ENCODE measurements at regions of chr17 and their contacts with region 1.

Region 1: DNA sequence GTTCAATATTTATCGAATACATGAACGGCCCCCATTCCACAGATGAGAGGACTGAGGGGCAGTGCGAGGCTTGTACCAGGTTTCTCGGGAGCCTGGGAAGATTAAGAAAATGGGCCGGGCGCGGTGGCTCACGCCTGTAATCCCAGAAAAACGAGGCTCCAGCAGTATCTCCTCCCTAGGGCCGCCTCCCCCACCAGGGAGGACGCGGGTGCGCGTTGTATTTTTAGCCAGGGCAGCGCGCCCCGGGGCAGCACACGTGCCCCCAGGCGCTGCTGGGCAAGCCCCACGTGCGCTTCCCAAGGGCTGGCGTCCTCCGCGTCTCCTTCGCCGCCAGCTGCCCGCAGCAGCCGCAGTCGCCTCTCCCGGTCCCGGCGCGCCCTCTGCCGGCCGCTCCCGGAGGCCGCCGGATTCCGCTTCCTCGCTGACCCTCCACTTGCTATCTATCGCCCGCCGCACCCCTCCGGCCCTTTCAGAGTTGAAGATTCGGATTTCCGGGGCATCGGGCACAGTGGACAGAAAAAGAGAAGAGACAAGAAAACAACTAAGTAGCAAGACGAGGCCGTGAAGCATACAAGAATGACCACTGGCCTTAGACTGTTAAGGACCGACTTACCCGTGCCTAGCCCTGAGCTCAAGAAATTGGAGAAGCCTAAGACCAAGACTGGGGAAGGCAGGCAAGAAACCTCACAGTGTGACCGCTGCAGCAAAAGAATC is 1.9 kb upstream of the YBX2 start:
- DNase-seq: peak; percentile 93
- ATAC-seq: peak; percentile 88

Region 2: GRCh38 chr17:7177196-7177953 is 119.0 kb before region 1 on chr17:
- intact Hi-C with region 1: no loop called
- DNase-seq: peak; percentile 70
- ATAC-seq: peak; percentile 83

Region 3: DNA sequence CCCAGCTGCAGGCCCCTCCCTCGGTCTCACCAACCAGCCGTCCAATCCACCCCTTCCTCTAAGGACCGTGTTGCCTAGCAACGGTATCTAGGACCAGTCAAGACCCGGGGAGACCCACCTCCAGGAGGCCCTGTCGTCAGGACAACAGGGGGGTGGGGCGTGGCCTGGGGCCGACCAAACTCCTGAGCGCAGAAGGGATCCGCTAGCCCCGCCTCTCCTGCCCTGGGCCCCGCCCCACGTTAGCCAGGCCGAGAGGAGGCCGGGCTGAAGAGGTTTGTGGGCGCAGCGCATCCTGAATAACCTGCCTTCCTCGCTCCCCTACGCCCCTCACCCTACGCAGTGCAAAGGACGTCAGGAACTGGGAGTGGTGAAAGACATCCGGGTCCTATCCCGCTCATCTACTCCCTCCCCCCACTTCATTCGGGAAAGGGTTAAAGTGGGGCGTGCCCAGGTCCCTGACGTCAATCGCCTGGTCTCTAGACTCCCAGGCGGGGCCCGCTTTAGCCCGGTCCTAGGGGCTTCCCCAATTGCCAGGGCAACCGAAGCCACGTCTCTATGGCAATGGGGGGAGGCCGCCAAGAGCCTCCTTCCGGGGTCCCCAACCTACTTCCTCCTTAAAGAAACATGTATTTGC is 91.4 kb before region 1 on chr17:
- intact Hi-C with region 1: no loop called
- DNase-seq: peak; percentile 93
- ATAC-seq: peak; percentile 91

Region 4: DNA sequence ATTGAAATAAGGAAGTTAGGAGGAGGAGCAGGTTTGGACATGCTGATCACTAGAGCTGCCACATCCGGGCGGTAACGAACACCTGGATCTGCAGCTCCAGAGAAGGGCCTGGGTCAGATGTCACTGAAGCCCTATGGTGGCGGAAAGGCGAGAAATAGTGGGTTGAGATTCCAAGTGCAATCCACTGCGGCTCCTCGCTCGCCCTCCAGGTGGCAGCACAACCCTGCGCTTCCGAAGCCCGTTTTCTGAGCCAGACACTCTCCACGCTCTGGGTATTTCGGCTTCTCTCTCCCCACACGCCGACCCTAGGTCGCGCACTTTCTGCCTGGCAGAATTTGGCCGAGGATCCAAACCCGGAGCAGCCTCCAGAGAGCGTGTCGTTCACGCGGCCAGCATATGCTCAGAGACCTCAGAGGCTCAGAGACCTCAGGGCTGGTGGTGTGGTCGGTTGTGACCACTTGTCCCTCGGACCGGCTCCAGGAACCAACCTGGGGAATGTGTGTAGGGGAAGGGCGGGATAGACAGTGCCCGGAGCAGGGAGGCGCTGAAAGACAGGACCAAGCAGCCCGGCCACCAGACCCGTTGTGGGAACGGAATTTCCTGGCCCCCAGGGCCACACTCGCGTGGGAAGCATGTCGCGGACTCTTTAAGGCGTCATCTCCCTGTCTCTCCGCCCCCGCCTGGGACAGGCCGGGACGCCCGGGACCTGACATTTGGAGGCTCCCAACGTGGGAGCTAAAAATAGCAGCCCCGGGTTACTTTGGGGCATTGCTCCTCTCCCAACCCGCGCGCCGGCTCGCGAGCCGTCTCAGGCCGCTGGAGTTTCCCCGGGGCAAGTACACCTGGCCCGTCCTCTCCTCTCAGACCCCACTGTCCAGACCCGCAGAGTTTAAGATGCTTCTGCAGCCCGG is 15.6 kb before region 1 on chr17:
- intact Hi-C with region 1: loop called (anchors 2 kb)
- DNase-seq: peak; percentile 91
- ATAC-seq: peak; percentile 67

Measured in left ventricle myocardium superior (tissue), 1 donor.